ENCODE measurements at regions of chr3 and their contacts with region 1.

Region 1: DNA sequence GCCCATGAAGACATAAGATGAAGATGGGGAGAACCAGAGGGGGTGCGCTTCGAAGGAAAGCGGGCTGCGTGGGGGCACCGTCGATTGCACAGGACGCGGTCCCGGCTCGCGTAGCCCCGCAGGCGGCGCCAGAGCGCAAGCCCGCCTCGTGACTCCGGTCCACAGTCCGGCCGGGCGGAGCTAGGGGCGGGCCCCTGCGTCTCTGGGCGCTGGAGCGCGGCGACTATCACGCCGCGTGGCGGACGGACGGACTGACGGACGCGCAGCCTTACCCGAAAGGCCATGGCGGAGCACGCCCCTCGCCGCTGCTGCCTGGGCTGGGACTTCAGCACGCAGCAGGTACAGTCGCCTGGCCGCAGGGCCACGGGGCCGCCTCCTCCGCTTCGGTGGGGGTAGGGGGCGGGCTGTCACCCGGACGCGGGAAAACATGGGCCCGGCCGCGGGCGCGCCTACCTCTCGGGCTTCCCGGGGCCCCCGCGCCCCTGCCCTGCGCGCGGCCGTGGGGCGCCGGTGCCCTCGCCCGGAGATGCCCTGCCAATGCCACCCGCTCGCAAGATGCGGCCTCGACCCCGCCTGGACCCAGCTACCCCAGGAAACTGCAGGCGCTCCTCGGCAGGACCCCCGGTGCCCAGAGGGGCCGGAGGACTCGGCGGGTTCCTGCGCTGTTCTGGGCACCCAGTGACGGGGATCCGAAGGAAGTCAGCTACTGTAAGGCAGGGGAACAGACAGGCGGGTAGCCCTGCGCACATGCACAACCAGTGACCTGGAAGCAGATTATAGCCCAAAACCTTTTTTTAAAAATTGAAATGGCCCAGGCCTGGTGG is at the start of gene XYLB:
- DNase-seq: peak; percentile 91 to 96
- ATAC-seq: peak; percentile 99
- H3K4me3 ChIP-seq: peak within 1 kb of the TSS; percentile 44 to 72
- H3K27ac ChIP-seq: no peak within 1 kb of the TSS
- H3K4me1 ChIP-seq: no peaks in the 10 kb centered on the region
- H3K27me3 ChIP-seq: no peaks in the 10 kb centered on the region
- total RNA-seq, gene XYLB: 2.2 to 6.2 TPM

Region 2: GRCh38 chr3:38154033-38154494 is 192.7 kb before region 1 on chr3:
- intact Hi-C with region 1: no loop called
- DNase-seq: no peak
- ATAC-seq: no peak
- H3K4me3 ChIP-seq: no peak overlapping the region
- H3K27ac ChIP-seq: no peak overlapping the region
- H3K4me1 ChIP-seq: no peaks in the 10 kb centered on the region
- H3K27me3 ChIP-seq: no peaks in the 10 kb centered on the region

Region 3: GRCh38 chr3:38460377-38461270 is 113.8 kb after region 1 on chr3:
- intact Hi-C with region 1: loop called in 1 of 2 experiments (anchors 5 kb)
- DNase-seq: no peak
- ATAC-seq: no peak
- H3K4me3 ChIP-seq: no peak overlapping the region
- H3K27ac ChIP-seq: peak overlapping the region in 1 of 2 donors; percentile 25
- H3K4me1 ChIP-seq: peaks cover 0 to 3% of the 10 kb centered on the region in 2 donors
- H3K27me3 ChIP-seq: no peaks in the 10 kb centered on the region

Region 4: DNA sequence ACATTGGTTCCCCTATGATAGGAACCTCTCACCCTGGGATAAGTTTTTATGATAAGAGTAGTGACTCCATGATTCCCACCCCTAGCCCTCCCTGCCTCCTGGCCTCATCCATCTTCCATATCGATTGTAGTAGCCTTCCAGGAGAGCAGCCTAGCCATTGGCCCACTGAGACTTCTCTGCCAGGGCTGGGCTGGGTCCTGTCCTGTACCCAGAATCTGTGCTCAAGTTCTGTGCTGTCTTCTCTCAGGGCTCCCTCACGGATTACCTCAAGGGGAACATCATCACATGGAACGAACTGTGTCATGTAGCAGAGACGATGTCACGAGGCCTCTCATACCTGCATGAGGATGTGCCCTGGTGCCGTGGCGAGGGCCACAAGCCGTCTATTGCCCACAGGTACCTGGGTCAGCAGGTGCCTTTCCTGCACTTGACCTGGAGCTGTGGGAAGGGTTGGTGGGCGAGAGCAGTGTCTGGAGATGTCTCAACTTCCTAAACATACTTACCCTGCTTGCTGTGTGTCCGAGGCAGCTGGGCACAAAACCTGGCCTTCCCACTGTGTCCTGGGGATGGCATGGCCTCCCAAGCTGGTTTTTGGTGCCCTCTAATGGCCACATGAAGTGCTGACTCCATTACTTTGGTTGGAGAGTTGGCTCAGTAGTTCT is 132.8 kb after region 1 on chr3:
- intact Hi-C with region 1: loop called (anchors 2 to 5 kb)
- DNase-seq: peak; percentile 75 to 85
- ATAC-seq: peak; percentile 60
- H3K4me3 ChIP-seq: no peak overlapping the region
- H3K27ac ChIP-seq: no peak overlapping the region
- H3K4me1 ChIP-seq: no peaks in the 10 kb centered on the region
- H3K27me3 ChIP-seq: no peaks in the 10 kb centered on the region

Measured in aorta (tissue), 5 donors.